Transverse colon (tissue), 4 donors: ENCODE measurements at regions of chr3 and their contacts with region 1.

Region 1: DNA sequence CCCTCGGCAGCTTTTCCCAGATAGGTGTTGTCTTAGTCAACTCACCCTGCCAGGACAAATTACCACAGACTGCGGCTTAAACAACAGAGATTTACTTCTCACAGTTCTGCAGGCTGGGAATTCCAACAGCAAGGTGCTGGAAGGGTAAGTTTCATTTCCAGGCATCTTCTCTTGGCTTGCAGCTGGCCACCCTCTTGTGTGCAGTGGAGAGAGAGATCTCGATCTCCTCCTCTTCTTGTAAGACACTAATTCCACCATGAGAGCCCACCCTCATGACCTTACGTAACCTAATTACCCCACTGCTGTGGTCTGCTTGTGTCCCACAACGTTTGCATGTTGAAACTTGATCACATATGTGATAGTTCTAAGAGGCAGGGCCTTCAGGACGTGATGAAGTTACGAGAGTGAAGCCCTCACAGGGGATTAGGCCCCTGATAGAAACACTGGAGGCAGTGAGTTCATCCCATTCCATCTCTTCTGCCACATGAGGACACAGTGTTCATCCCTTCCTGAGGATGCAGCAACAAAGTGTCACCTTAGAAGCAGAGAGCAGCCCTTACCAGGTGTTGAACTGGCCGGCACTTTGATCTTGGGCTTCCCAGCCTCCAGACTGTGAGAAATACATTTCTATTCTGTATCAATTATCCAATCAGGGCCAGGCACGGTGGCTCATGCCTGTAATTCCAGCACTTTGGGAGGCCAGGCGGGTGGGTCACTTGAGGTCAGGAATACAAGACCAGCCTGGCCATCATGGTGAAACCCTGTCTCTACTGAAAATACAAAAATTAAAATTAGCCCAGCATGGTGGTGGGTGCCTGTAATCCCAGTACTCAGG is 247.7 kb downstream of the PLCL2 start:
- DNase-seq: no peak
- H3K4me3 ChIP-seq: no peak overlapping the region
- H3K27ac ChIP-seq: no peak overlapping the region
- H3K4me1 ChIP-seq: no peaks in the 10 kb centered on the region
- H3K27me3 ChIP-seq: no peaks in the 10 kb centered on the region
- CTCF ChIP-seq: no peak
- EP300 ChIP-seq: no peak
- POLR2A ChIP-seq: no peak

Region 2: DNA sequence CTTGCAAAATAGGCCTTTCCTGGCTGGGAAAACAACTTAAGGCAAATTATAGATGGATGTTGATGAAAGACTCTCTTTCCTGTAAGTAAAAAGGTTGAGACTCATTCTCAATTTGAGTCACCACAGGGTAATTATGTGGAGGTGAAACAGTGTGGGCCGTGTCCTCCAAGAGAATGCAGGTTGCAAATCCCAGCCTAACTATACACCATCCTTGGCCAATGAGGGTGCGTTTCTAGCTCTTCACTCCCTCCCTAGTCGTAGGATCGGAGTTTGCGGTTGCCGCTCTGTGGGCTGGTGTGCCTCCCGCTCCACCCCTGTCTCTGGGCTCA is 12.1 kb after region 1 on chr3:
- in situ Hi-C with region 1: no loop called
- intact Hi-C with region 1: loop called (anchors 1 kb)
- DNase-seq: no peak
- H3K4me3 ChIP-seq: no peak overlapping the region
- H3K27ac ChIP-seq: no peak overlapping the region
- H3K4me1 ChIP-seq: no peaks in the 10 kb centered on the region
- H3K27me3 ChIP-seq: no peaks in the 10 kb centered on the region
- CTCF ChIP-seq: no peak
- EP300 ChIP-seq: no peak
- POLR2A ChIP-seq: no peak

Region 3: DNA sequence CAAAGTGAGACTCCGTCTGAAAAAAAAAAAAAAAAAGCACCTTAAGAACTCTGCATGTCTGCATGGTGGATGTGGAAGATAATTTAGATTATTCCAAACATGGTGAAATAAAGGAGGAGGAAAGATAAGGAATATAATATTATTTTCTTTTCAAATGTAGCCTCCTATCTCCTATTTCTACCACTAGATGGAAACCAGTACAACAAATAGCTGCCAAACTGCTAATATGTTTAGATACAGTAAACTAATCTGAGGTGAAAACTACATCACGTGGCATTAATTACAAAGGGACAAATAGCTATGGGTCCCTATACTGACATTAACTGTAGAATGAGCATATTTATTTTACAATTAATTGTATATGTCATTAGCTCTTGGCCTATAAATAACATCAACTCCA is 412.1 kb after region 1 on chr3:
- in situ Hi-C with region 1: no loop called
- intact Hi-C with region 1: no loop called
- DNase-seq: no peak
- H3K4me3 ChIP-seq: no peak overlapping the region
- H3K27ac ChIP-seq: no peak overlapping the region
- H3K4me1 ChIP-seq: no peaks in the 10 kb centered on the region
- H3K27me3 ChIP-seq: no peaks in the 10 kb centered on the region
- CTCF ChIP-seq: no peak
- EP300 ChIP-seq: no peak
- POLR2A ChIP-seq: no peak

Region 4: DNA sequence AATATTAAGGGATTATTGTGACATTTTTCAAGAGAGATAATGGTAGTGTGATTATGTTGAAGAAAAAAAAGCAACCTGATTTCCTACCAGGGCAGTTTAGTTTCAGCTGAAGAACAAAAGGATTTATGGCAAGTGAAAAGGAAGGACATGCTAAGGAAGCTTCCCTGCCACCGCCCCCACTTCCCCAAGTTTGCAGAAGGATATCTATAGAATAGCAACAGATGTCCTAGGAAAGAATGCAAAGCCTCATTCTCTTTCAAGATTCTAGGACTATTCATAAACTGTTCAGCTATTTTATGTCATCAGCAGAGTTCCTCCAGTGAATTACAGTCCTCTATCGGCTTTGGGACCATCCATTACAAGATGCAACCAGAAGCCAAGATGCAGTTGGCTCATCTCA is 1131.9 kb after region 1 on chr3:
- in situ Hi-C with region 1: no loop called
- intact Hi-C with region 1: no loop called
- DNase-seq: no peak
- H3K4me3 ChIP-seq: no peak overlapping the region
- H3K27ac ChIP-seq: no peak overlapping the region
- H3K4me1 ChIP-seq: peaks cover 0 to 4% (median 0%) of the 10 kb centered on the region in 4 donors
- H3K27me3 ChIP-seq: no peaks in the 10 kb centered on the region
- CTCF ChIP-seq: no peak
- EP300 ChIP-seq: no peak
- POLR2A ChIP-seq: no peak